Heart left ventricle (tissue), 16 donors: ENCODE measurements at regions of chr17 and their contacts with region 1.

Region 1: GRCh38 chr17:32870027-32870670 is 6.8 kb downstream of the MYO1D start:
- DNase-seq: peak in 3 of 5 donors; percentile 23 to 39 (median 34)
- ATAC-seq: peak; percentile 59 to 77 (median 72)
- H3K4me3 ChIP-seq: no peak overlapping the region
- H3K27ac ChIP-seq: peak overlapping the region; percentile 10 to 79 (median 53)
- H3K4me1 ChIP-seq: peaks cover 0 to 58% (median 27%) of the 10 kb centered on the region in 12 donors
- H3K27me3 ChIP-seq: no peaks in the 10 kb centered on the region
- CTCF ChIP-seq: no peak
- POLR2A ChIP-seq: no peak

Region 2: GRCh38 chr17:32813021-32813420 is 57.1 kb before region 1 on chr17:
- intact Hi-C with region 1: loop called in 1 of 10 experiments (anchors 5 kb)
- DNase-seq: no peak
- ATAC-seq: no peak
- H3K4me3 ChIP-seq: no peak overlapping the region
- H3K27ac ChIP-seq: no peak overlapping the region
- H3K4me1 ChIP-seq: peaks cover 0 to 3% (median 0%) of the 10 kb centered on the region in 12 donors
- H3K27me3 ChIP-seq: no peaks in the 10 kb centered on the region
- CTCF ChIP-seq: no peak
- POLR2A ChIP-seq: no peak